ENCODE measurements at regions of chr14 and their contacts with region 1.

Region 1: DNA sequence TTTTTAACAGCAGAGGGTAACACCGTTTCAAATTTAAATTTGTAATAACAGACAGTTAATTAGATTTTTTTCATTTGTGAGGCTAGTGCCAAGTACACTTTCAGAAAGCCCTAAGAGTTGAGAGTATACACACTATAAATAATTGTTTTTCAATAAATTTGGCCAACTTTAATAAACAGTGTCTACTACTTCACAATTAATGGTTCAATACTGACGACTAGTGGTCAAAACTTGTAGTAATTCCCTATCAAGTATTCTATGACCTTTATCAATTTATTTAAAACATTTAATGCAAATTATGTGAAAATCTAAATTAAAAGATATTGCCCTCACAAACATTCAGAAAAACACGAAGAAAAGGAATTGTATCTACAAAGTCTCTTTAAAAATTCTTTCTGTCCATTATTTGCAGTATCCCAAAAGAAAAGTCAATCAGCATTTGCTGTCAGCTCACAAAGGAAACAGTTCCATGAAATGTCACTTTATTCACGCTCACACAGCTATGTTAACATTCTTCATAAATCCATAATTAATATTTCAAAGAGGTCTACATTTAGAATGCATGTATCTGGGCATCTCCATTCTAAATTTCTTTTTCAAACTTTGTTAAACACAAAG is 91.2 kb downstream of the CEP128 start:
- DNase-seq: no peak
- ATAC-seq: peak in 2 of 4 donors; percentile 44 to 74
- H3K4me3 ChIP-seq: peak overlapping the region; percentile 16
- H3K27ac ChIP-seq: no peak overlapping the region
- H3K4me1 ChIP-seq: peaks cover 4% of the 10 kb centered on the region
- H3K27me3 ChIP-seq: no peaks in the 10 kb centered on the region
- CTCF ChIP-seq: peak; percentile 75

Region 2: DNA sequence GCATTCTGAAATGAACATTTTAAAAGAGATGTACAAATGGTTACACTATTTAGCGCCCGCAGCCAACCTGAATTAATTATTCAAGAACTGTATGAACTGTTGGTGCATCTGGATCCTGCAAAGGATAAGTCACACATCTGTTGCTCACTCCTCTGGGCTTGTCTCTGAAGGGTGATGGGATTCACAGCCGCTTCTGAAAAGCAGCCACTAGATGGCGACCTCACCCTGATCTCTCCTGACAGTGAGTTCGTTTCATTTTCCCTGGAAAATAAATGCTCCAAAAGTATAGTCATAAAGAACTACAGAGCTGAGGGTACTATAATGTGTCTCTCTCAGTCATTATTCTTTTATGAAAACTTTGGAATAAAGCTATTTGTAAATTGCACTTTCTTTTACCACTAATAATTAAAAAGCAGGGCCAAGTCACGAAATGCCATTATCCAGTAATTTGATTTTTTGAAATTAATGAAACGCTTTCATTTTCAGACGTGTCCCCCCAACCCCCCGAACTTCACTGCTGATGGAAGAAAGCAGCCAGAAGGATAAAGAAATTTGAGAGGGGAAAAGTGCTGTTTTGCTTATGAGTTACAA is 1890.5 kb before region 1 on chr14:
- intact Hi-C with region 1: loop called in 1 of 2 experiments (anchors 10 kb)
- DNase-seq: peak; percentile 55 to 70
- ATAC-seq: peak; percentile 44 to 85 (median 65)
- H3K4me3 ChIP-seq: peak overlapping the region; percentile 39
- H3K27ac ChIP-seq: no peak overlapping the region
- H3K4me1 ChIP-seq: no peaks in the 10 kb centered on the region
- H3K27me3 ChIP-seq: peaks cover 0 to 2% (median 0%) of the 10 kb centered on the region in 3 donors
- CTCF ChIP-seq: peak; percentile 81

Region 3: GRCh38 chr14:78967110-78967809 is 1883.0 kb before region 1 on chr14:
- intact Hi-C with region 1: loop called (anchors 2 to 10 kb)
- DNase-seq: no peak
- ATAC-seq: no peak
- H3K4me3 ChIP-seq: no peak overlapping the region
- H3K27ac ChIP-seq: no peak overlapping the region
- H3K4me1 ChIP-seq: no peaks in the 10 kb centered on the region
- H3K27me3 ChIP-seq: peaks cover 0 to 2% (median 0%) of the 10 kb centered on the region in 3 donors
- CTCF ChIP-seq: no peak

Region 4: DNA sequence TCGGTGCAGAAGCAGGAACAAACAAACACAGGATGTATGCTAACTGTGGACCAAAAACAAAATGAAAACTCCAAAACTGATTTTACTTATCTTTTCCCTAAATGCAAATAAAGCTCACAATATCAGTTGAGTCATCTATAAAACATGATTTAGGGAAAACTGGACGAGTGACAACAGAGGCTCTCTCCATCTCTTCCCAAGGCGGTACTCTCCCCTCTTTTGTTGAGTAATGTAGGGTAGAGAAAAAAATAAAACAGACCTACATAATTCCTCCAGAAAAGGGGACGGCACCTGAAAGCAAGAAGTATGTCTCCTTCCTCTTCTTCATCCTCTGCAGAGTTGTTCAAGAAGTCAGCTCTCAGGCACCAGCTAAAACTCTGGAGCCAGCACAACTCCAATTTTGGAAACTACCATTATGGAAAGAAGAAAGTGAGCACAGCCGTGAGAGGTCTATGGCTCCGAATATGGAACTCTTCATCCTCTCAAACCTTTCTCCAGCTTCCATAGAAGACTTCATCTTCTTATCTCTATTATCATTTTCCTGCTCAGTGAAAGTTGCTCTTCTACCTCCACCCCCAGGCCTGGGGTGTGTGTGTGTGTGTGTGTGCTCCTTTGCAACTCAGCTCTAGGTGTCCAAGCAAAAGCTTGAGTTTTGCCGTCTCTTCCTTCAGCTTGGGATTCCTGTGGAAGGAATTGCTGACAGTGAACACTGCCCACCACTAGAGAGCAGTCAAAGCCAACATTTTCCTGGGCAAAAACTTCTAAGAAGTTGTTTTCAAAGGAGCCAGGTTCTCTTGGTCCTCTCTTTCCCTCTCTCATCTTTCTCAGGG is 794.4 kb before region 1 on chr14:
- intact Hi-C with region 1: loop called (anchors 10 kb)
- DNase-seq: peak in 1 of 2 donors; percentile 13
- ATAC-seq: peak in 3 of 4 donors; percentile 44 to 74 (median 51)
- H3K4me3 ChIP-seq: no peak overlapping the region
- H3K27ac ChIP-seq: no peak overlapping the region
- H3K4me1 ChIP-seq: no peaks in the 10 kb centered on the region
- H3K27me3 ChIP-seq: no peaks in the 10 kb centered on the region
- CTCF ChIP-seq: peak; percentile 57

Region 5: DNA sequence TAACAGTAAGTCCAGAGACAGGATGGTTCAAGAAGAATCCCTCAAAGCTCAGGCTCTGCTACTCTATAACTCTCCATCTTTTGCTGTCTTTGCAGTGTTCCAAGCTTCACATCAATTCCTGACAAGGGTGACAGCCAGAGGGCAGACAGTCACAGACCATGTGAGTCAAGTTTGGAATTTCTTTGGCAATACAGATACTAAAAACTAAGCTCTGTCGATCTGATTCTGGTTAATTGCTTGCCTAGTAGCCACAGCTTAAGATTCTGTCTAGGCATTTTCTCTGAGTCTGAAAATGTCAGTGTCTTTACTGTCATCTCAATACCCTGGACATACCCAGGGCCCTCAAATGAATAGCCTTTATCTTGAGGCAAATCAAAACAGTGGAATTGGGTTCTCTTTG is 62.4 kb before region 1 on chr14:
- intact Hi-C with region 1: no loop called
- DNase-seq: no peak
- ATAC-seq: no peak
- H3K4me3 ChIP-seq: no peak overlapping the region
- H3K27ac ChIP-seq: no peak overlapping the region
- H3K4me1 ChIP-seq: no peaks in the 10 kb centered on the region
- H3K27me3 ChIP-seq: no peaks in the 10 kb centered on the region
- CTCF ChIP-seq: no peak

Measured in psoas muscle (tissue), 8 donors.